CD4-positive, alpha-beta memory T cell (primary cell): ENCODE measurements at regions of chr18 and their contacts with region 1.

Region 1: GRCh38 chr18:9919564-9920232 is 5.9 kb downstream of the VAPA start:
- DNase-seq: no peak
- H3K4me3 ChIP-seq: no peak overlapping the region
- H3K4me3 Mint-ChIP-seq: no peak overlapping the region
- H3K27ac ChIP-seq: no peak overlapping the region
- H3K27ac Mint-ChIP-seq: no peak overlapping the region
- H3K4me1 ChIP-seq: peaks cover 94% of the 10 kb centered on the region
- H3K4me1 Mint-ChIP-seq: peaks cover 28 to 38% (median 35%) of the 10 kb centered on the region in 4 donors
- H3K27me3 ChIP-seq: no peaks in the 10 kb centered on the region
- H3K27me3 Mint-ChIP-seq: no peaks in the 10 kb centered on the region

Region 2: DNA sequence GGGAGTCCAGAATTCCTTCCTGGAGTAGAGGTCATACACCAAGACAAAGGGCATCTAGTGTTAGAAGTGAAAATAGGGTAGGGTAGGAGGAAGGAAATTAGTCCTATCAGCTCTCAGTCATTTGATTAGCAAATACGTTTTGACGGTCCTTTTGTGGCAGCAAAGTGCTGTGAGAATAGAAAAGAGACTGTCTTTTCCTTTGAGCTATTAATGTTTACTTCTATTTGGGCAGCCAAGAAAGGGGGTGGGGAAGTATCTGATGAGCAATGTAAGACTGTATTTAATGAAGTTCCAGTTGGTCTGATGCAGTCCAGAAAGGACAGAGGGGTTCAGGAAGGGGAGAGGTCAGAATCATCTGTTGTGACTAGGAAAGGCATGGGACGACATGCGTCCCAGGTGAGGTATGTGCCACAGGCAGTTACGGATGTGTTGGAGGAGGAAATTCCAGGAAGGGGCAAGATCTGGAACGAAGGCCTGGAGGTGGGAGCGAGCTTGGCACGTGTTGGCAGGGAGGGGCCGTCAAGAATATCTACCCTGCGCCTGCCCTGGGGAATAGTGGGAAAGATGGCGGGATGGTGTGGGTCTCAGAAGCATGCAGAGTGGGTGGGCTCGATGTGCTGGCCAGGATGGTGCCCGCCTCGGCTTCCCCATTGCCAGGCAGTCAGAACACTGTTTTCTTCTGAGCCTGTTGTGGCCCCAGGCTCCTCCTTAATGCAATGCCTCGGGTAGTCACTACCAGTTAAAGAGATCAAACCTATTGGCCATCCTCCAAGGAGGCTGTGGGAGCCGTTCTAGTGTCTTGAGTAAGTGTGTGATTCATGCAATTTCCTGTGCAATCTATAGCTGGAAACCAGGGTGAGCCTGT is 91.8 kb before region 1 on chr18:
- CTCF ChIA-PET with region 1: no interaction called
- POLR2A ChIA-PET with region 1: no interaction called
- intact Hi-C with region 1: no loop called
- DNase-seq: no peak
- H3K4me3 ChIP-seq: no peak overlapping the region
- H3K4me3 Mint-ChIP-seq: no peak overlapping the region
- H3K27ac ChIP-seq: no peak overlapping the region
- H3K27ac Mint-ChIP-seq: no peak overlapping the region
- H3K4me1 ChIP-seq: no peaks in the 10 kb centered on the region
- H3K4me1 Mint-ChIP-seq: no peaks in the 10 kb centered on the region
- H3K27me3 ChIP-seq: no peaks in the 10 kb centered on the region
- H3K27me3 Mint-ChIP-seq: peaks cover 11 to 21% of the 10 kb centered on the region in 2 donors

Region 3: DNA sequence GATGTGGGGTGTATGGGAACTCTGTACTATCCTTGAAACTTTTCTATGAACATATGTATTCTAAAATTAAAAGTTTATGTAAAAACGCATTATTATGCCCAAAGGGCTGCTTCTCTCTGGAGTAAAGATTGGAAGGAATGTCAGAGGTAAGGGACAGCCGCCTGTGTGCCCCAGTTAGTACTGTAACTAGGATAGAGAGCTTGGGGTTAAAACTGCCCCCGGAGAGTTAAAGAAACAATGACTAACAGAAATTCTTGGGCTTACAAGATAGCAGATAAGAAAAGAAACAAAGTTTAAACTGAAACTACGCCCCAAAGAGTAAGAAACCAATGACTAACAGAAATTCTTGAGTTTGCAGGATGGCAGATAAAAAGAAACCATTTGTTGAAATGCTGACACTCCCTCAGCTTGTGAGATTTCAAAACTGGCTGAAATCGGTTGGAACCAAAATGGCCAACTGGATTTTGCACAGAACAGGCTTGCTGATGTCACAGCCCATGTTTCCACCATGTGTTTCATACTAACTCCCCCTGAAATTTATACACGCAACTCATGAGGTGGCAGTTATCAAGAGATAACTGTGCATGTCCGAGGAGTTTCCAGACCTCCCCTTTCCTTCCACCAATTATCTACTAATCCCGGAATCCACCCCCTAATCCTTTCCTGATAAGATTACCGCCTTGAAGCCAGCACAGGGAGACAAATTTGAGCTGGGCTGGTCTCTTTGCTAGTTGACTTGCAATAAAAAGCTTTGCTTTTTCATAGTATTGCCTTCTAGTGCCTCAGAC is 42.6 kb before region 1 on chr18:
- CTCF ChIA-PET with region 1: no interaction called
- POLR2A ChIA-PET with region 1: no interaction called
- intact Hi-C with region 1: no loop called
- DNase-seq: no peak
- H3K4me3 ChIP-seq: no peak overlapping the region
- H3K4me3 Mint-ChIP-seq: peak overlapping the region in 1 of 8 donors; percentile 24
- H3K27ac ChIP-seq: no peak overlapping the region
- H3K27ac Mint-ChIP-seq: no peak overlapping the region
- H3K4me1 ChIP-seq: no peaks in the 10 kb centered on the region
- H3K4me1 Mint-ChIP-seq: peaks cover 0 to 9% (median 1%) of the 10 kb centered on the region in 4 donors
- H3K27me3 ChIP-seq: no peaks in the 10 kb centered on the region
- H3K27me3 Mint-ChIP-seq: peaks cover 5% of the 10 kb centered on the region in 2 donors

Region 4: DNA sequence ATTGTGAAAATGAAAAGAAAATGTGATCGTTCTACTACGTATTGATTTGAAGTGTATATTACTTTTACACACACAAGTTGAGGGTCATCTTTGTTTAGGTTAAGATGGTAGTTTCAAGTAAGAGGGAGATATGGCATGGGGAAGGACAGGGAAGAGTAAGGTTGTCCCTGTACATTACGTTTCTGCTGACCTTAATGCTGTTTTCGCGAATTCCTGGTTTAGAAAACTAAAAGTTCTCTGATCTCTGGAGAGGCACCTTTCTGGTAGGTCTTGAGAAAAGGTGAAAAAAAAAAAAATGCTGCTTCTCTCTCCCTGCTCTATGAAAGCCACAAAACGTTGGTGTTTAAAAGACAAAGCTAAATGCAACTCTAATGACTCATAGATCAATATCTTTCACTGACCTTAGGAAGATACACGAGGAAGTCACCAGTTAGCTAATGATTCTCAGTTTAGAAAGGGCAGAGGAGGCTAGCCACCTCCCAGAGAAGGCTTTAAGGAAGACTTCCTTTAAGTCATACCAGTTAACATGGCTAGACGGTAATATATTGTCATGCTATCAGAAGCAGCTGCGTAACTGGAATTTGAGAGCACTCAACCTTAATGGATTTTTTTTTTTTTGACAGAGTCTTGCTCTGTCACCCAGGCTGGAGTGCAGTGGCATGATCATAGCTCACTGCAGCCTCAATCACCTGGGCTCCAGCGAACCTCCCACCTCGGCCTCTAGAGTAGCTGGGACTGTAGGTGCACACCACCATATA is 20.7 kb before region 1 on chr18:
- CTCF ChIA-PET with region 1: no interaction called
- POLR2A ChIA-PET with region 1: no interaction called
- intact Hi-C with region 1: no loop called
- DNase-seq: no peak
- H3K4me3 ChIP-seq: no peak overlapping the region
- H3K4me3 Mint-ChIP-seq: no peak overlapping the region
- H3K27ac ChIP-seq: no peak overlapping the region
- H3K27ac Mint-ChIP-seq: no peak overlapping the region
- H3K4me1 ChIP-seq: no peaks in the 10 kb centered on the region
- H3K4me1 Mint-ChIP-seq: peaks cover 0 to 2% (median 0%) of the 10 kb centered on the region in 4 donors
- H3K27me3 ChIP-seq: no peaks in the 10 kb centered on the region
- H3K27me3 Mint-ChIP-seq: peaks cover 5 to 9% of the 10 kb centered on the region in 2 donors

Region 5: GRCh38 chr18:9961041-9961440 is 41.3 kb after region 1 on chr18:
- CTCF ChIA-PET with region 1: interaction called, 3 read pairs
- POLR2A ChIA-PET with region 1: no interaction called
- intact Hi-C with region 1: loop called (anchors 5 kb)
- DNase-seq: no peak
- H3K4me3 ChIP-seq: no peak overlapping the region
- H3K4me3 Mint-ChIP-seq: no peak overlapping the region
- H3K27ac ChIP-seq: no peak overlapping the region
- H3K27ac Mint-ChIP-seq: peak overlapping the region in 2 of 7 donors; percentile 0 to 63
- H3K4me1 ChIP-seq: peaks cover 2% of the 10 kb centered on the region
- H3K4me1 Mint-ChIP-seq: peaks cover 16 to 35% (median 22%) of the 10 kb centered on the region in 4 donors
- H3K27me3 ChIP-seq: no peaks in the 10 kb centered on the region
- H3K27me3 Mint-ChIP-seq: no peaks in the 10 kb centered on the region